ENCODE measurements at regions of chr11 and their contacts with region 1.

Region 1: DNA sequence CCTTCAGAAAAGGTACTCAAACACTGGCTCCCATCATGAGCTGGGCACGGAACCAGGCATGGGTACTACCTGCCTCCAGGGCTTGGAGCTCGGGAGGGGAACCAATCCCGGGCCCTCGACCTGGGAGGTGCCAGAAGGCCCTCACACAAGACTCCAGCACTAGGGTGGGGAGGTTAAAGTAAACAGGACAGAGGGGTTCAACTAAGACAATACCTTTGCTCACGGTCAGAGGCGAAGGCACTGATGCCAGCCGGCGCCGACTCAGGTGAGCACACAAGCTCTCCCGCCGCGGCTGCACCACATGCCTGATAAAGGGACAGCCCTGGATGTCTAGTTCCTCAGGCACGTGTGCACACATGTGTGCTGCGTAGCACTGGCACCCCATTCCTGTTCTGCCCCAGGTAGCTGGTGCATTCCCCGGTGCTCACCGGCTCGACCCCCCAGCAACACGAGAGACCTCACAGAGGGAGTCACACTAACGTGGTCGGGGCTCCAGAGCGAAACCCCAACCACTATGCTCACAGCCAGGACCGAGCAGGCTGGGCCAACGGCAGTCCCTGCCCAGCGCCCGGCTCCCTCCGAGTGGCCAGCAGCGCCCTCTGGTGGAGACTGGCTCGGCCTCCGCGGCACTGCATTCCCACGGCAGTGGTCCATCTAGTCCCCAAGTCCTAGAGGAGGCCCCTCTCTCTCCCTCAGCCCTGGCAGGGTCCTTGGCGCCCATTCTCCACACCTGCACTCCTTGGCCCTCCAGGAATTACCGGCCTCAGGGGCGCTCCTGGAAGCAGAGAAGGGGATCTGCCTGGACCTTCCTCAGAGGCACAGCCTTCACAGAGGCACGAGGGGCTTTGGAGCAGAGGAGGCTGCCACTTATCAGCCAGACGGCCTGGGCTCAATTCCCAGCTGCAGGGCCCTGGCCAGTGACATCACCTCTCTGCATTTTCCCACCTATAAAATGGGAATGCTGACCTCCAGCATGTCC is 28.8 kb upstream of the MOB2 start:
- DNase-seq: peak; percentile 84
- ATAC-seq: peak; percentile 88
- H3K4me3 Mint-ChIP-seq: no peak overlapping the region
- H3K27ac Mint-ChIP-seq: no peak overlapping the region
- H3K4me1 Mint-ChIP-seq: peaks cover 52% of the 10 kb centered on the region
- H3K27me3 Mint-ChIP-seq: no peaks in the 10 kb centered on the region
- CTCF ChIP-seq: peak; percentile 88

Region 2: DNA sequence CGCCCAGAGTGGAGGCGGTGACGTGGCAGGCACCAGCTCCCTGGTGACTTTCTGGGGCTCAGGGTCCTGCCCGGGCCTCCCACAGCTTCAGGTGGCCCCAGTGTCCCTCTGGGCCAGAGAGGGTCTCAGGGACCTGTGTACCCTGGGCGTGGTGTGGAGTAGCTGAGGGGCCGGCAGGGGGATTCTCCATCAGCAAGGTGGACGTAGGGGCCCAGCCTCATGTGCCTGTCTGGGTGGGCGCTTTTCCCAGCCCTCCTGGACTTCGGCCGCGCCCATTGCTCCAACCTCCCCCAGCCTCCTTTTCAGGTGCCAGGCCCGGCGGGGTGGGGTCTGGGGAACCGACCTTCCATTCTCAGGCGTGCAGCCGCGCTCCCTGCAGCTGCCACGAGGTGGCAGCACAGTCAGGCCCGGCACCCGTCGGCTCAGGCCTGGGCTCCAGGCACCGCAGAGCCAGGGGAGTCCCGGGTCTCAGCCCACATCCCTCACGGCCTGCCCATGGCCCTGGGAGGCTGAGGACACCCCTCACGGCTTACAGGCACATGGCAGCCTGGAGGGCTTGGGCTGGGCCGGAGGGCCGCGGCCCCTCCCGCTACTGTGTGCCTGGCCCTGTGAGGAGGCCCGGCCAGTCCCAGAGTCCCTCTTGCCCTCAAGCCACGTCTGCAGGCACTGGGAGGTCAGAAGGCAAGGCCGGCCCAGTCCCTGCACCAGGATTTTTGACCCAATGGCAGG is 312.4 kb before region 1 on chr11:
- CTCF ChIA-PET with region 1: interaction called, 9 read pairs
- POLR2A ChIA-PET with region 1: no interaction called
- intact Hi-C with region 1: loop called (anchors 10 kb)
- DNase-seq: peak; percentile 76
- ATAC-seq: peak; percentile 92
- H3K4me3 Mint-ChIP-seq: no peak overlapping the region
- H3K27ac Mint-ChIP-seq: no peak overlapping the region
- H3K4me1 Mint-ChIP-seq: no peaks in the 10 kb centered on the region
- H3K27me3 Mint-ChIP-seq: no peaks in the 10 kb centered on the region
- CTCF ChIP-seq: peak; percentile 93

Region 3: DNA sequence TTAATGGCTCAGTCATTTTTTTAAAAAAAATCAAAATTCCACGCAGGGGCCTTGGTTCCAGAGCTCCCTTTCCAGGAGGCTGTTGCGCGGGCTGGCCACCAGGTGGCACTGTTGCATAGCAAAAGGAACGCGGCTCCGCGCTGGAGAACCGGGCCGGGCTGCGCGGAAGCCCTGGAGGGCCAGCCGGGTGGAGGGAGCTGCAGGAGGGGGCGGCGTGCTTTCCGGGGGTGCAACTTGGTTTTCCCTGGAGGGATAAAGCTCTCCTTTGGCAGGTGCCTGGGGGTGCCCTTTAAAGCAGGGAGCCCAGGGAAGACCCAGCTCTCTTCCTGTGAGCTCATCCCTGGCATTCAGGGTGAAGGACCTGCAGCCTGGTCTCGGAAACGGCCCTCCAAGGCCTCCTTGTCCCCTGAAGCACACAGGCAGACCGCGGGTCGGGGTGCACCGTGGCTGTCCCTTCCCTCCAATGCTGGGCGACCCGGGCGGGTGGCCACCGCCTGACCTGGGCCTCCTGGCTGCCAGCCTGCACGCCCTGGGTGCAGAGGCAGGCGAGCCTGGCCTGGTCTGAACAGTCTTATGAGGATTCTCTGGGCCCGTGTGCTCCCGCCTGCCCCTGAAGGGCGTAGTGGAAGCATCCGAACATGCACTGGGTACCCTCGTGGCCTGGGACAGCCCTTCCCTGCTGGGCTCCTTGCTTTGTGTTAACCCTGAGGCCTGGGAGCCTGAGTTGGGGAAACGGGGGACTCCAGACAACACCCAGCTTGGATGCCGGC is 137.6 kb after region 1 on chr11:
- CTCF ChIA-PET with region 1: no interaction called
- POLR2A ChIA-PET with region 1: no interaction called
- intact Hi-C with region 1: no loop called
- DNase-seq: peak; percentile 74
- ATAC-seq: peak; percentile 89
- H3K4me3 Mint-ChIP-seq: no peak overlapping the region
- H3K27ac Mint-ChIP-seq: no peak overlapping the region
- H3K4me1 Mint-ChIP-seq: no peaks in the 10 kb centered on the region
- H3K27me3 Mint-ChIP-seq: peaks cover 14% of the 10 kb centered on the region
- CTCF ChIP-seq: peak; percentile 94